ENCODE measurements at regions of chr7 and their contacts with region 1.

Region 1: GRCh38 chr7:142782922-142783900 is 12.4 kb downstream of the PRSS2 start:
- DNase-seq: peak; percentile 72
- H3K27ac ChIP-seq: no peak overlapping the region
- CTCF ChIP-seq: peak; percentile 93

Region 2: DNA sequence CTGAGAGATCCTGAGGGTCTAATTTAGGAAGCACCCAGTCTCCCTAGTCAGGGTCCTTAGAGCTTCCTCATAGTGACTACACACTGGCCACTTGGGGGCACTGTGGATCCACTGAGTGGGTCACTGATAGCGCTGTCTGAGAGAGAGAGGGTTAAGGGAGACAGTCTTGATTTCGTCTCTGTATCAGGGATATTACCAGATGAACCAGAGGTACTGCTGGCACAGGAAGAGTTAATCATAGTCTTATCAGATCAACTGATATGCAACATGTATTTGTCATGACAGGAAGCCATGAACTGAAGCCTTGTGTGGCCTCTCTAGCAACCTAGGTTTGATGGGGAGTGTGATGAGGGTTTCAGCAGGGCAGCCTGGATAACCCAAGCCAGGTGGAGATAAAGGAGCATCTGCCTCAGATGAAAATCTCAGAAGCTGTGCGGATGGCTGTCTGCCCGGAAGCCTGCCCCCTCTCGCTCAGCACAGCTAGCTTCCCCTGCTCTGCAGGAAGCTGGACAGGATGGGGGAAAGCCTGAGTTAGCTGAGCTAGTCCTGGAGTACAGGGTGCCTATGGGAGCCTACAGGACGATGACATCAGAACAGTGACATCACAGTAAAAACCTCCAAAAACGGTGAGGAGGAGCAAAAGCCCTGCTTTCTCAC is 248.0 kb before region 1 on chr7:
- CTCF ChIA-PET with region 1: interaction called, 15 read pairs
- POLR2A ChIA-PET with region 1: no interaction called
- DNase-seq: peak; percentile 58
- H3K27ac ChIP-seq: no peak overlapping the region
- CTCF ChIP-seq: peak; percentile 86

Region 3: DNA sequence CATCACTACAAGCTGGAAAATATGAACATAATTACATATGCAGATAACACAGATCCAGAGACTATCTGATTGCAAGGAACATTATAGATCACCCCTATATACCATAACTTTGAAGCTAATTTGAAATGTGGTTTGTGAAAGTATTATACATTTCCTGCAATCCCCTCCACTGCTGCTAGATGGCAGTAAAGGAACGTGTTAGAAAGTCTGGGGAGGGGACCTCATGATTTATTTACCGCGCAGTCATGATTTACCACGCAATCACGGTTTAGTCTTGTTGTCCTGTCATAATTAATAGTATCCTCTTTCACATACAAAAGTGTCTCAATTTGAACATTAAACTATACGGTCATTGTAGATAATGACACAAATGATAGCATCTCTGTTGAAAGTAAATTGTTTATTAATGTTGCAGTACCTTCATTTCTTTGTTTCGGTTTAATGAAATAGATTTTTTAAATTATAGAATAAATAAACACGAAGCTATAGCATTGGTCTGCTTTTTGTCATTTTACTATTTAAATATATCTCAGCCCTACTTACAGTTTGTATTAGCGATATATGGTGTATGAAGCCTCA is 179.3 kb before region 1 on chr7:
- CTCF ChIA-PET with region 1: interaction called, 15 read pairs
- POLR2A ChIA-PET with region 1: no interaction called
- DNase-seq: peak; percentile 65
- H3K27ac ChIP-seq: no peak overlapping the region
- CTCF ChIP-seq: peak; percentile 94